Heart right ventricle (tissue), 16 donors: ENCODE measurements at regions of chr11 and their contacts with region 1.

Region 1: DNA sequence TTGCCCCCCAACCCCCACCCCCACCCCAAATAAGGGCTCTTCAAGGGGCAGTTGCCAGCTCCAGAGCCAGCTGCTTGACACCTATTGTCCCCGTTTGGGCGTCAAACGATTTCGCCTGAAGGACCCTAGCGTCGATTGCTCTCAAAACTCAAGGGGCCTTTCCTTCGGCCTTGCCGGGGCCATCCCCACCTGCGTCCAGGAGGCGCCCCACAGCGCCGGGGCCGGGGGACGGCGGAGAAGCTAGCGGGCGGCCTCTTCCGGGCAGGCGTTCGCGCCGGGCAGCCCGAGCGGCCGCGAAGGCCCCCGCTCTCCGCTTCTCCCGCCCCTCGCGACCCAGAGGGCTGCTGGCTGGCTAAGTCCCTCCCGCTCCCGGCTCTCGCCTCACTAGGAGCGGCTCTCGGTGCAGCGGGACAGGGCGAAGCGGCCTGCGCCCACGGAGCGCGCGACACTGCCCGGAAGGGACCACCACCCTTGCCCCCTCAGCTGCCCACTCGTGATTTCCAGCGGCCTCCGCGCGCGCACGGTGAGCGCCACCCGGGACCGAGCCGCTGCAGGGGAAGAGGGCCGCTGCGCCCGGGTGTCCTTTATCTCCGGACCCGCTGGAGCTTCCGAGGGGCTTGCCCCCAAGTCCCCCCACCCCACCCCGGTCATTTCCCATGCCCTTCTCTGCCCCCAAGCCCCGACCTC is at the start of gene CAPRIN1:
- DNase-seq: peak; percentile 88 to 89
- ATAC-seq: peak; percentile 89 to 96 (median 93)
- H3K4me3 ChIP-seq: peak within 1 kb of the TSS; percentile 77 to 99 (median 94)
- H3K27ac ChIP-seq: peak within 1 kb of the TSS; percentile 97 to 100 (median 100)
- H3K4me1 ChIP-seq: peaks cover 11 to 43% (median 37%) of the 10 kb centered on the region in 9 donors
- H3K27me3 ChIP-seq: no peaks in the 10 kb centered on the region
- CTCF ChIP-seq: no peak
- total RNA-seq, gene CAPRIN1: 103 to 142 (median 120) TPM

Region 2: DNA sequence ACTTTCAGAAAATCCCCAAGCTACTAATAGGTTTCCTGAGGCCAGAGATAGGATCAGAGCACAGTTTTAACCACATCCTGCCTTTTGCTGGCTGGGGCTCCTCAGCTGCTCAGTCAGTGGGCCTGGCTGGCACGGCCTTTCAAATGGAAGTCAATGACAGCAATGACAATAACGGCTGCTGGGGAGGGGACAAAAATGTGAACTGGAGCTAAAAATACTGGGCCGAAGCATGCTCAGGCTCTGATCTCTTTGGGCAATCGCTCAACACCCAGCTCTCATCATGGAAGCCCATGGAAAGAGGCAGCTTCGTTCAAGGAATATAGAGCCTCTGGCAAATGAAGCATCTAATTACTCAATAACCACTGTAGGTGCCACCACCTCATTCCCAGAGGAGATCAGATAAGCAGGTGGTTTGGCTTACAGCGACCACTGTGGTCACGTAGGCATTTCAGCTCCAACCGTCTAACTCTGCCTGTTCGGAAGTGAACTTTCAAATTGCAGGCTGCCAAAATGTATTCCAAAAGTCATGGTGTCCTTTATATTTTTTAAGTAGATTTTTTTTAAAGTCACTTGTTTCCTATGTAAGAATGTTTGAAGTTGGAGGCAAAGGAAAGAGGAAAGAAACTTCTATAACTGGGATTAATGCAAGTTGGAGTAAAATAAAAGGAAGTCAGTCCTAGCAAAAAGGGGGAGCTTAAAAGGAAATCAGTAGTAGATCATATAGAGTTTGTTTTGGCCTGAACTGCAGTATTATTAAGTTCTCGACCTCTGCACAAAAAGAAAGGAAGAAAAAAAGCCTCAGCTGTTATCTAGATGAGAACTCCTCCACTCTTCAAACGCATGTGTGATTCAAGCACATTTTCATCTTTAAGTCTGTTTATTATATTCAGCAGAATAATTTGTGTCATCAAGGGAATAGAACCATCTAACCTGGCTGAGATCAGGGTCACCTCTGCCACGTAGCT is 1630.3 kb before region 1 on chr11:
- intact Hi-C with region 1: loop called in 1 of 10 experiments (anchors 10 kb)
- DNase-seq: peak in 1 of 2 donors; percentile 68
- ATAC-seq: peak; percentile 74 to 94 (median 88)
- H3K4me3 ChIP-seq: peak overlapping the region in 1 of 10 donors; percentile 12
- H3K27ac ChIP-seq: peak overlapping the region in 9 of 10 donors; percentile 37 to 71 (median 49)
- H3K4me1 ChIP-seq: peaks cover 0 to 40% (median 19%) of the 10 kb centered on the region in 9 donors
- H3K27me3 ChIP-seq: peaks cover 0 to 37% (median 14%) of the 10 kb centered on the region in 7 donors
- CTCF ChIP-seq: no peak